ENCODE measurements at regions of chr14 and their contacts with region 1.

Region 1: GRCh38 chr14:100192672-100193416 is 33.4 kb upstream of the DEGS2 start:
- DNase-seq: peak; percentile 100
- H3K4me3 Mint-ChIP-seq: peak overlapping the region; percentile 27
- H3K27ac Mint-ChIP-seq: peak overlapping the region; percentile 73
- H3K4me1 Mint-ChIP-seq: peaks cover 16% of the 10 kb centered on the region
- H3K27me3 Mint-ChIP-seq: no peaks in the 10 kb centered on the region

Region 2: GRCh38 chr14:99982537-99983250 is 210.2 kb before region 1 on chr14:
- CTCF ChIA-PET with region 1: interaction called, 53 read pairs
- POLR2A ChIA-PET with region 1: interaction called, 9 read pairs
- DNase-seq: peak; percentile 67
- H3K4me3 Mint-ChIP-seq: no peak overlapping the region
- H3K27ac Mint-ChIP-seq: no peak overlapping the region
- H3K4me1 Mint-ChIP-seq: peaks cover 14% of the 10 kb centered on the region
- H3K27me3 Mint-ChIP-seq: no peaks in the 10 kb centered on the region

Region 3: DNA sequence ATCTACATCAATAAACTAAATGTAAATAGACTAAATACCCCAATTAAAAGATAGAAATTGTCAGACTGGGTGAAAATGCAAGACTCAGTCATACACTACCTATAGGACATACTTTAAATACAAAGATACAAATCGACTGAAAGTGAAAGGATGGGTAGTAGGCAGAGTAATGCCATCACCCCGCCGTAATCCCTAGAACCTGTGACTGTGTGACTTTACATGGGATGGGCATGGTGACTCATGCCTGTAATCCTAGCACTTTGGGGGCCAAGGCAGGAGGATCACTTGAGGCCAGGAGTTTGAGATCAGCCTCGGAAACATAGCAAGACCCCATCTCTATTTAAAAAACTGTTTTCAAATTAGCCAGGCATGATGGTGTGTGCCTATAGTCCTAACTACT is 130.3 kb before region 1 on chr14:
- CTCF ChIA-PET with region 1: interaction called, 42 read pairs
- POLR2A ChIA-PET with region 1: interaction called, 3 read pairs
- DNase-seq: peak; percentile 56
- H3K4me3 Mint-ChIP-seq: peak overlapping the region; percentile 74
- H3K27ac Mint-ChIP-seq: peak overlapping the region; percentile 97
- H3K4me1 Mint-ChIP-seq: peaks cover 67% of the 10 kb centered on the region
- H3K27me3 Mint-ChIP-seq: no peaks in the 10 kb centered on the region

Region 4: DNA sequence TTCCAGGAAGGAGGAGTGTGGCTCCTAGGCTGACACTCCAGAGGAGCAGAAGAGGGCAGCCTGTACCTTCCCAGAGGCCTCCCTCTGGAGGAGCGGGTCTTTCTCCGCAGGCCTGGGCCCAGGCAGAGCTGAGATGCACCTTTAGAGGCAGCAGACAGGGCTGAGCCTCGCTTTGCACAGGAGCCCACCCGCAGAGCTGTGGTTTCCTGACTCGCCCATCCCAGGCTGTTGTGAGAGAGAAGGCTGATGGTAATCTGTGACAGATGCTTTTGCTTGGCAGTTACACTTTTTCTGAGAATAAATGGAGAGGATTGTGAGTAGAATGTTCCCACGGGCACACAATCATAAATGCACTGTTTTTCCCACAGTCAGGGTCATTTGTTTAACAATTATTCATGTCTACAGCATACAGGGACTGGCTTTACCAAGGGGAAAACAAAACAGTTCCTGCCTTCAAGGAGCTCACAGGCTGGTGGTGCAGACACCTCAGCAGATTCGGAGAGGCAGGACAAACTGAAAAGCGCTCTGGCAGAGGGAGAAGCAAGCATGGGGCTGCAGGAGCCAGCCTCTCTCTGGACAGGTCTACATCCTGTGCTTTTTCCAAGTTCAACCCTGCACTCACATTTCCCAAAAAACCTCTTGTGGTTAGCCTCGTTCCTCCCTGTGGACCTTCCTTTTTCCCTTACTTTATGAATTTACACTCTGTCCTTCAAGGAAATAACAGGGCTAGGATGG is 113.7 kb before region 1 on chr14:
- CTCF ChIA-PET with region 1: interaction called, 14 read pairs
- POLR2A ChIA-PET with region 1: interaction called, 6 read pairs
- DNase-seq: peak; percentile 91
- H3K4me3 Mint-ChIP-seq: peak overlapping the region; percentile 76
- H3K27ac Mint-ChIP-seq: peak overlapping the region; percentile 90
- H3K4me1 Mint-ChIP-seq: peaks cover 98% of the 10 kb centered on the region
- H3K27me3 Mint-ChIP-seq: no peaks in the 10 kb centered on the region

Region 5: DNA sequence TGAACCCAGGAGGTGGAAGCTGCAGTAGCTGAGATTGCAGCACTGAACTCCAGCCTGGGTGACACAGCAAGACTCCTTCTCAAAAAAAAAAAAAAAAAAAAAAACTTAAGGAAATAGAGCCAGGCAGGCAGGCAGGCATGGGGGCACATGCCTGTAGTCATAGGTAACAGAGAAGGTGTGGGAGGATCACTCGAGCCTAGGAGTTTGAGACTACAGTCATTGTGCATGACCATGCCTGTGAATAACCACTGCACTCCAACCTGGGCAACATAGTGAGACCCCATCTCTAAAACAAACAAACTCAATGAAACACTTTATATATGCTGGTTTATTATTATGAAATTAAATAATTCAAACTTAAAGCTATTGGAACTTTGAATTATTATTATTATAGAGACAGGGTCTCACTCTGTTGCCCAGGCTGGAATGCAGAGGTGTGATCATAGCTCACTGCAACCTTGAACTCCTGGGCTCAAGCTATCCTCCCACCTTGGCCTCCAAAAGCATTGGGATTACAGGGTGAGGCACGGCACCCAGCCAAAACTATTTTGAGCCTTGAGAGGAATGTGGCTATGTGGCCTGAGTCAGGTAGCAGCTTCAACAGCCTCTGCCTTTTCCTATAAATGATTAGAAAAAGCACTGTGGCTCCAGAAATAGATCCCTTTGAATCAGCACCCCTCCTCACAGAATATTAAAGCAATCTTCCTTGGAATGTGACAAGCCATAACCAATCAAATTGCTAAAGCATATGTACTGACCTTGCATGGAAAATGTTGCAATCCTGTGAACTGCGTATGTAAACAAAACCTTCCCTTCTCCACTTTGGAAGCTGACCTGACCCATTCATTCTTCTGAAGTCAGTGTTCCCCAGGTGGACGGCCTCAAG is 11.3 kb after region 1 on chr14:
- CTCF ChIA-PET with region 1: interaction called, 53 read pairs
- POLR2A ChIA-PET with region 1: interaction called, 5 read pairs
- DNase-seq: no peak
- H3K4me3 Mint-ChIP-seq: no peak overlapping the region
- H3K27ac Mint-ChIP-seq: no peak overlapping the region
- H3K4me1 Mint-ChIP-seq: no peaks in the 10 kb centered on the region
- H3K27me3 Mint-ChIP-seq: no peaks in the 10 kb centered on the region

Region 6: DNA sequence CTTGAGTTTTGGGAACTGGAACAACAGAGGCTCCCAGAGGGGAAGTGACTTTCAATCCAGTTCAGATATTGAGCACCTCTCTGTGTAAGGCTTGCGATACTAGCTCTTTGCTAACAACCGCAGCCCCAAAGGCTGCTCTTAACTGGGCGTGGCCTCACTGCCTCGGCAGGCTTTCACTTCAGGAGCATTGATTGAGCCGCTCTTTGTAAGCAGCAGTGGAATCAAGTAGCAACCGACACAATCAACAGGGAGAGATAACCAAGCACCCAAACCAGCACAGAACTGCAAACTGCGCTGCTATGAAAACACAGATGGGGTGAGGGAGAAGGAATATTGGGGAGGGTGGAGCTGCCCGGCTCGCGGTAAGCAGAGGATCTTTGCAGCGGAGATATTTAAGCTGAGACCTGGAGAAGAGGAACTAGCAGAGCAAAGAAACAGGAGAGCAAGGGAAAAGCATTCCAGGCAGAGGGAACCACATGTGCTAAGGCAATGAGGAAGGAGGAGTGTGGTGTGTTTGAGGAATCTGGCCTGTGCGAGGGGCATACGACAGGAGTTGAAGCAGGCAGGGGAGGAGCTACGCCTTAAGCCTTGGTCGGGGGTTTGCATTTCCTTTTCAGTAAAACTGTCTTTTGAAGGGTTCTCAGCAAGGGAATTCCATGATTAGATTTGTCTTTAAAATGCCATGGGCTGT is 28.8 kb after region 1 on chr14:
- CTCF ChIA-PET with region 1: interaction called, 100 read pairs
- POLR2A ChIA-PET with region 1: interaction called, 28 read pairs
- DNase-seq: peak; percentile 82
- H3K4me3 Mint-ChIP-seq: no peak overlapping the region
- H3K27ac Mint-ChIP-seq: no peak overlapping the region
- H3K4me1 Mint-ChIP-seq: peaks cover 8% of the 10 kb centered on the region
- H3K27me3 Mint-ChIP-seq: no peaks in the 10 kb centered on the region

Measured in activated CD4-positive, alpha-beta memory T cell treated with anti-CD3 and anti-CD28 coated beads, Interleukin-2, amount 10 ng/mL, durations not matched to agents 7 days and 5 days (primary cell).